Common myeloid progenitor, CD34-positive (primary cell): ENCODE measurements at regions of chr2 and their contacts with region 1.

Region 1: GRCh38 chr2:181120625-181121024 is 140.2 kb downstream of the UBE2E3 start:
- DNase-seq: no peak
- H3K4me3 ChIP-seq: no peak overlapping the region
- H3K27ac ChIP-seq: no peak overlapping the region
- H3K4me1 ChIP-seq: peaks cover 5 to 12% (median 9%) of the 10 kb centered on the region in 4 experiments
- H3K27me3 ChIP-seq: no peaks in the 10 kb centered on the region

Region 2: DNA sequence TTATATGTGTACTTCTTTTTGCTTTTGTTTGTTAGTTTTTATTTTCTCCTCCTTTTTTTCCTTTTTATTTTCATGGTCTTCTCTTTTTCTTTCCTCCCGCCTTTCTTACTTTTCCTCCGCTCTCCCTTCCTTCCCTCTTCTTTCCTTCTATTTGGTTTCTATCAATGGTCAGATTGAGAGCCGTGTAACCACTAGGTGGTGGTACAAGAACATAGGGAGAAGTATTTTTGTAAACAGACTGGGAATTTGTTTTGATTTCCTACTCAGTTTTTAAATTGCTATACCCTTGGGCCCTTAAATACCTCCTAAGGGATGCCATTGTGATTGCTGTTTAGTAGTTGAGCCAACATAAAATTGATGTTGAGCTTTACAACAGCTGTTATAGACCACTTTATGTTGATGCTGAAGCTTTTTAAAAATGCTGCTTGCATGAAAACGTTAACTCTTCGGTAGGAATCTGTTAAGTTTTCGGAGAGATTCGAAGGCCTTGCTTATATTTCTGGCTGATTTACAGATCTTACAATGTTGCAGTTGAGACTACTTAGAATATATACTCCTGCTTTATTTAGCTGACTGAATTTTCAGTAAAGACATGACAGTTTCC is 16.0 kb before region 1 on chr2:
- CTCF ChIA-PET with region 1: interaction called, 10 read pairs
- POLR2A ChIA-PET with region 1: no interaction called
- DNase-seq: peak; percentile 60 to 71 (median 62)
- H3K4me3 ChIP-seq: peak overlapping the region in 2 of 7 experiments; percentile 8 to 53
- H3K27ac ChIP-seq: no peak overlapping the region
- H3K4me1 ChIP-seq: peaks cover 3 to 25% (median 9%) of the 10 kb centered on the region in 4 experiments
- H3K27me3 ChIP-seq: no peaks in the 10 kb centered on the region

Region 3: DNA sequence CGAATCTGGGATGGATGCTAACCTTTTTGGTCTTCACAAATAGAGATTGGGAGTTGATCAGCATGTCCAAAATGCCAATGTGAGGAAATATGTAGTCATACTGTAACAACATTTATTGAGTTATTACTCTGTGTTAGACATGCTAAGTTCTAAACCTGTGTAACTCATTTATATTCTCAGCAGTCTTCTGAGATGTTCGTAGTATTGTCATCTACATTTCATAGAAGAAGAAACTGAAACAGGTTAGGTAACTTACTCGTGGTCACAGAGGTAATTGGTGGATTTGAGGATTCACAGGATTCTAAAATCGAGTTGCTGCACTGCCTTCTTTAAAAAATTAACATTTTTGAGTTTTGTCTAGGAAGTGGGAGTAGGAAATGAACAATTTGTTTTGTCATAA is 21.9 kb after region 1 on chr2:
- CTCF ChIA-PET with region 1: no interaction called
- POLR2A ChIA-PET with region 1: no interaction called
- DNase-seq: no peak
- H3K4me3 ChIP-seq: no peak overlapping the region
- H3K27ac ChIP-seq: no peak overlapping the region
- H3K4me1 ChIP-seq: peaks cover 0 to 7% (median 4%) of the 10 kb centered on the region in 4 experiments
- H3K27me3 ChIP-seq: no peaks in the 10 kb centered on the region